Right cardiac atrium (tissue), 5 donors: ENCODE measurements at regions of chr20 and their contacts with region 1.

Region 1: GRCh38 chr20:49132995-49133478 is 55.1 kb downstream of the STAU1 start:
- DNase-seq: no peak
- ATAC-seq: peak; percentile 72 to 80
- H3K4me3 ChIP-seq: no peak overlapping the region
- H3K27ac ChIP-seq: no peak overlapping the region
- H3K4me1 ChIP-seq: peaks cover 2% of the 10 kb centered on the region
- H3K27me3 ChIP-seq: no peaks in the 10 kb centered on the region

Region 2: GRCh38 chr20:49219089-49219923 is 86.3 kb after region 1 on chr20 and contains the start of gene DDX27:
- intact Hi-C with region 1: loop called (anchors 2 to 5 kb)
- DNase-seq: peak; percentile 96 to 98 (median 97)
- ATAC-seq: peak; percentile 96 to 98
- H3K4me3 ChIP-seq: peak within 1 kb of the TSS; percentile 97
- H3K27ac ChIP-seq: peak within 1 kb of the TSS; percentile 97
- H3K4me1 ChIP-seq: no peaks in the 10 kb centered on the region
- H3K27me3 ChIP-seq: no peaks in the 10 kb centered on the region
- total RNA-seq, gene DDX27: 13.0 to 17.5 (median 15.4) TPM